Pancreas (tissue), 10 donors: ENCODE measurements at regions of chr3 and their contacts with region 1.

Region 1: GRCh38 chr3:49539659-49540560 is 14.4 kb upstream of the BSN start:
- DNase-seq: peak; percentile 94 to 99 (median 97)
- ATAC-seq: peak; percentile 92 to 96 (median 93)
- H3K4me3 ChIP-seq: peak overlapping the region; percentile 12 to 53 (median 34)
- H3K27ac ChIP-seq: peak overlapping the region; percentile 69 to 80 (median 80)
- H3K4me1 ChIP-seq: peaks cover 1 to 11% (median 6%) of the 10 kb centered on the region in 3 donors
- H3K27me3 ChIP-seq: no peaks in the 10 kb centered on the region
- CTCF ChIP-seq: peak; percentile 70 to 89 (median 78)

Region 2: GRCh38 chr3:49656541-49657112 is 116.7 kb after region 1 on chr3:
- intact Hi-C with region 1: loop called in 1 of 3 experiments (anchors 10 kb)
- DNase-seq: no peak
- ATAC-seq: no peak
- H3K4me3 ChIP-seq: no peak overlapping the region
- H3K27ac ChIP-seq: no peak overlapping the region
- H3K4me1 ChIP-seq: no peaks in the 10 kb centered on the region
- H3K27me3 ChIP-seq: no peaks in the 10 kb centered on the region
- CTCF ChIP-seq: no peak

Region 3: DNA sequence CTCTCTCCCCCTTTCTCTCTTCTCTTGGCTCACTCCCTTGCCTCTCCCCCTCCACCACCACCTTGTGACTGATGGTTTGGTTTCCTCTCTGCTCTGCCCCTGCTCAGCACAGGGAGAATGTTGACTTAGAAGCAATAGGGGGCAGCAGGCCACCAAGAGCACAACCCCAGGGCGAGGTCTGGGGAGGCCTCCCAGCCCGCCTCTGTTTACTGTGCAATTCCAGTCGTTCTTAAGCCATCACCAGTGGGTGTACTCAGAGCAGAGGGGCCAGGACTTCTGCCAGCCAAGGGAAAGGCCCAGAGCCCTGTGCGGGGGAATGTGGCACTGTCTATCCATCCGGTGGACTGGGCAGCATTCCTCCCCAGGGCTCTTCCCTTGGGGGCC is 128.5 kb after region 1 on chr3:
- intact Hi-C with region 1: loop called in 2 of 3 experiments (anchors 5 kb)
- DNase-seq: no peak
- ATAC-seq: no peak
- H3K4me3 ChIP-seq: no peak overlapping the region
- H3K27ac ChIP-seq: no peak overlapping the region
- H3K4me1 ChIP-seq: peaks cover 0 to 15% (median 10%) of the 10 kb centered on the region in 3 donors
- H3K27me3 ChIP-seq: no peaks in the 10 kb centered on the region
- CTCF ChIP-seq: no peak

Region 4: DNA sequence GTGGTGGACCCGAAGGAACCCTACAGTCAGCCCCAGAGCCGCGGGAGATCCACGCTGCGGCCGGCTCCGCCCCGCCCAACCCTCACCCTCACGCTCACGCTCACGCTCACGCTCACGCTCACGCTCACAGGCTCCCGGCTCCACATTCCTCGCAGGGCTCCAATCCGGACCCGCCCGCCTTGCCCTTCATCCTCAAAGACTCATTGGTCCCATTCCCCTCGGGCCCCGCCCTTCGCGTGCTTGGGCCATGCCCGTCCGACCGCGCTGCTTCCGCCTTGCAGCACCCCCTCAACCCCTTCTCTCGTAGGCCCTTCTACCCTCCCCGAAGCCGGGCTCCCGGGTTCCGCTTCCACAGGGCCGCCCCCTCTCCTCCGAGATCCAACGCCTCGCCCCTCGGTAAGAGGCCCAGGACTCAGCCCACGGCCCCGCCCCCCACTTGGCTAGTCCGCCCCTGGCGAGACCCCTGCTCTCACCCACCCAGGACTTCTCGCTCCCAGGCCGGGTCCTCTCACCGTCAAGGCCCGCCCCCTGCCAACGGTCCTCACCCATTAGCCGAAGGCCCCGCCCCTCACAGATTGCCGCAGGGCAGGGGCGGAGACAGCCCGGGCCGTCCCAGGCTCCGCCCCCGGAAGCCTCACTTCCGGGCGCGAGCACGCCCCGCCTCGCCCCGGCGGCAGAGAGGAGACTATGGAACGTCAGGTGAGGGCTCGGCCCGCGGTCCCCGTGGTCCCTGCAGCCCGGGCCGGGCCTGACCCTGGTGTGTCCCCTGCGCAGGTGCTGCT is 134.0 kb after region 1 on chr3 and contains the start of gene APEH:
- intact Hi-C with region 1: loop called in 2 of 3 experiments (anchors 5 kb)
- DNase-seq: peak; percentile 95 to 98 (median 96)
- ATAC-seq: peak; percentile 90 to 96 (median 92)
- H3K4me3 ChIP-seq: peak within 1 kb of the TSS; percentile 66 to 98 (median 92)
- H3K27ac ChIP-seq: peak within 1 kb of the TSS; percentile 86 to 93 (median 90)
- H3K4me1 ChIP-seq: peaks cover 5 to 15% (median 6%) of the 10 kb centered on the region in 3 donors
- H3K27me3 ChIP-seq: no peaks in the 10 kb centered on the region
- CTCF ChIP-seq: no peak
- total RNA-seq, gene APEH: 41.2 to 57.3 (median 49.3) TPM